ENCODE measurements at regions of chr5 and their contacts with region 1.

Region 1: DNA sequence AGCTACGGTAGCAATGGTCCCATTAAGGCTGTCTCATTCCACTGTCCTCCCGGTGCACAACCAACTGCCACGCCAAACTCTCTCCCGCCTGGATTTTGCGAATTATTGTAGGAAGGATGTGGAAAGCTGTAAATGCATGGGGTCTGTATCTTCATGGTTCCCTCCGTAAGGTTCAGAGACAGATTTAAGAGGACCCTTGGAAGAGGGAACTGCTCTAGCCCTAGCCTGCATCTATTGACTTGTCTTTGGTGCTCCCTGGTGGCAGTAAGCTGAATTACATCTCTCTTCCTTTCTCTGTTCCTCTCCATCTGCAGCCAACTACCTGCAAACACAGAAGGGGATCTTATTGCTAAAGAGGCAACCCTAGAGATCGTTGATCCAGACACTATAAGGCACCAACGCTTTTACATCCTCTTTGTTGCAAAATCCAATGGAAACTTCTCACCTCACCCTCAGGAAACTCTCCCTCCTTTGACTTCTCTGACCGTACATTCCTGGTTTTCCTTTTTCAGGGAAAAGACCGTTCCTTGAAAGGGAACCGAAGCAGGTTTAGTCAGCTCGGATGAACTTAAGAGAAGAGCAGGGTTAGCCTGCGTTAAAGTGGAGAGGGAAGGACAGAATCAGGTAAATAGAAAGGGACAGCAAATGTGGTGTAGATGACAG is 11.9 kb downstream of the CAPSL start:
- DNase-seq: peak; percentile 63 to 85 (median 76)
- H3K4me3 ChIP-seq: no peak overlapping the region
- H3K27ac ChIP-seq: no peak overlapping the region
- H3K4me1 ChIP-seq: peaks cover 2 to 20% (median 18%) of the 10 kb centered on the region in 4 experiments
- H3K27me3 ChIP-seq: peaks cover 0 to 6% (median 0%) of the 10 kb centered on the region in 5 experiments

Region 2: DNA sequence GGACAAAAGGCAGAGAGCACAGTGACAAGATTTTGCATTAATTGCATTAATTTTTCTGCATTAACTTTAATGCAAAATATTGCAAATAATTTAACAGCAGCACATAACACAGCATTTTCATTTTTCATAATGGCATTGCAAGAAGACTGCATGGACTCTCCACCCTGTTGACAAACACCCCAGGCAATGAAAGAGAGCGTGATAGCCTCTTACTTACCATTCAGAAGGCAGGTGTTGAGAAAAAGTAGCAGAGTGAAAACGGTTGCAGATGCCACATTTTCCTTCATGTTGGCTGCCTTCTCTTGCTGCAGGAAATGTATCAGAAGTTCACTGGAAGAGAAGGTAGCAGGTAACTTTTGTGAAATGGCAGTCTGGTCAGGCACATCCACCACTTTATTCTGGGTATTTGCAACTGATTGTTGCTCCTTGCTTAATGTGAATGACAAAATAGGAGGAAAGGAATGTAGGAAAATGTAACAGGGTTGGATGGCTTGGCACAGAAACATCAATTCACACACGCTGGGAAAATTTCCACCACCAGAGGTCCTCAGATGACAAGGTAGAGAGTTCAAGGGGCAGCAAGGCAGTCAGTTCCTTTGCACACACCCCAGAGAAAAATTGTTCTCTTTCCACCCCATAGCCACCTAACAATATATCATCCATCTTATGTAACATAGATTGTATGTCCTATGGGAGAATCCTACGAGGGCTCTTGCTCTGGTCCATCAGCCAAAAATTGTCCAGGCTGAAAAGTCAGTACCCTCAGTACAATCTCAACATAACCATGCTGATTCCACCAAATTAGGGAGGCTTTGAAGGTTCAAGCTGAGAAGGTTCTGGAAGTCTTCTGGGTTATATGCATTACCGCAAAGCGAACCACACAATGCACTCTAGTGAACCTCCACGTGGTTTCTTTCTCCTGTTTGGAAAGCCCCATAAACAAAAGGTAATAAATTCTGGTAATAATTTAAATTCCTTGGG is 836.9 kb before region 1 on chr5:
- CTCF ChIA-PET with region 1: interaction called, 25 read pairs
- POLR2A ChIA-PET with region 1: no interaction called
- DNase-seq: peak; percentile 22 to 57 (median 50)
- H3K4me3 ChIP-seq: no peak overlapping the region
- H3K27ac ChIP-seq: no peak overlapping the region
- H3K4me1 ChIP-seq: no peaks in the 10 kb centered on the region
- H3K27me3 ChIP-seq: peaks cover 0 to 10% (median 2%) of the 10 kb centered on the region in 5 experiments

Region 3: DNA sequence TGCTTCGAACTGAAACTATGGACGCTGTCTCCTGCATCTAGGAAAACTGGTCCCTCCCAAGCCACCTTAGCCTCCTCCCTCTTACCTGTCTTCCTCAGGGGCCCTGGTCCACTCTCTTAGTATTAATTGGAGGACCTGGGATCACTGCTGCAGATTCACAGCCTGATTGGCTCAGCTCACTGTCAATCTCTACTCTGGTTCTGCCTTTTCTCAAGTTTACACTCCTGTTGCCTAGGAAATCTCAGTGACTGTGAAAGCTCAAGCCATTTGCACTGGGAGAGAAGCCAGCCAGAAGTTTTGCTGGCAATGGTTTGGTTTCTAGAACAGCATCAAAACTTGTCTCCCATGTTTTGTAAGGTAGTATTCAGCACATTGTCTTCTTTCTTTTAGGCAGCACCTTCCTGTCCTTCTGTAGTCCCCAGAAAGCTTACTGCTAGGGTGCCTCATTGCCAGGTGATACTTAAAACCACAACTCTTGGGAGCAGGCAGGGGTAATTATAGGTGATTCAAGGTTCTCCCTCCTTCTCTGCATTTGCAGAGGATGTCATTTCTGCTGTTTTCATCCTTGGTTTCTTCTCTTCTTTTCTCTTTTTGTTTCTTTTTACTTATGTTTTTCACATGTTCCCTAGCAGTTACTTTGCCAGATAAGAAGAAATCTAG is 12.2 kb after region 1 on chr5 and contains the start of gene CAPSL:
- CTCF ChIA-PET with region 1: interaction called, 16 read pairs
- POLR2A ChIA-PET with region 1: no interaction called
- DNase-seq: peak; percentile 72 to 88 (median 86)
- H3K4me3 ChIP-seq: peak within 1 kb of the TSS in 1 of 7 experiments; percentile 40
- H3K27ac ChIP-seq: no peak within 1 kb of the TSS
- H3K4me1 ChIP-seq: peaks cover 0 to 10% (median 1%) of the 10 kb centered on the region in 4 experiments
- H3K27me3 ChIP-seq: no peaks in the 10 kb centered on the region

Region 4: DNA sequence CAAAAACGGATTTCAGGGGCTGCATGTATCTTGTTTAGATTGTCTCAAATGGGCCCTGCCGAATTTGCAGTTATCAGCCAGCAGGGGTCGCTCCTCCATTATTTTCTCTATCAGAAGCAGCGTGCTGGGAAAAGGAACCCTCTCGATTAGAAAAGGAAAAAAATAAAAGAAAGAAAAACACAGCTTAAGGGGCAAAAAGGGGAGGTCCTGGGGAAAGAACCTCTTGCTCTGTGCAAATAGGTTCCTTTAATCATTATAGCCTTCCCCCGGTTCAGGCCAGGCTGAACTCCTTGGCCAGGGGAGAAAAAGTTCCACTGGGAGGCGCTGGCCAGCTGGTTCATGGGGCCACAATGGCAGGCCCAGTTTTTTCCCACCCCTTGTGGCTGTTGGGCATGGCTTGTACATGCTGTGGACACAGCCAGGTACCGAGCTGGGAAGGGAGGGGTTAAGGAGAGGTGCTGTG is 36.9 kb after region 1 on chr5:
- CTCF ChIA-PET with region 1: no interaction called
- POLR2A ChIA-PET with region 1: no interaction called
- DNase-seq: no peak
- H3K4me3 ChIP-seq: no peak overlapping the region
- H3K27ac ChIP-seq: no peak overlapping the region
- H3K4me1 ChIP-seq: no peaks in the 10 kb centered on the region
- H3K27me3 ChIP-seq: peaks cover 0 to 4% (median 0%) of the 10 kb centered on the region in 5 experiments

Region 5: GRCh38 chr5:35979715-35980114 is 53.2 kb after region 1 on chr5:
- CTCF ChIA-PET with region 1: no interaction called
- POLR2A ChIA-PET with region 1: no interaction called
- DNase-seq: peak in 1 of 3 donors; percentile 7
- H3K4me3 ChIP-seq: no peak overlapping the region
- H3K27ac ChIP-seq: no peak overlapping the region
- H3K4me1 ChIP-seq: peaks cover 0 to 3% (median 0%) of the 10 kb centered on the region in 4 experiments
- H3K27me3 ChIP-seq: peaks cover 0 to 2% (median 0%) of the 10 kb centered on the region in 5 experiments

Region 6: GRCh38 chr5:36026706-36027465 is 100.4 kb after region 1 on chr5:
- CTCF ChIA-PET with region 1: no interaction called
- POLR2A ChIA-PET with region 1: no interaction called
- DNase-seq: no peak
- H3K4me3 ChIP-seq: no peak overlapping the region
- H3K27ac ChIP-seq: no peak overlapping the region
- H3K4me1 ChIP-seq: no peaks in the 10 kb centered on the region
- H3K27me3 ChIP-seq: peaks cover 0 to 2% (median 0%) of the 10 kb centered on the region in 5 experiments

Measured in common myeloid progenitor, CD34-positive (primary cell).